Left cardiac atrium (tissue), 4 donors: ENCODE measurements at regions of chr7 and their contacts with region 1.

Region 1: GRCh38 chr7:7424151-7424873 is 111.4 kb downstream of the COL28A1 start:
- DNase-seq: peak; percentile 46
- ATAC-seq: peak; percentile 90 to 93

Region 2: GRCh38 chr7:7044501-7045200 is 379.7 kb before region 1 on chr7:
- intact Hi-C with region 1: no loop called
- DNase-seq: no peak
- ATAC-seq: no peak

Region 3: GRCh38 chr7:7103343-7104313 is 320.7 kb before region 1 on chr7:
- intact Hi-C with region 1: loop called in 1 of 2 experiments (anchors 10 kb)
- DNase-seq: no peak
- ATAC-seq: peak in 1 of 2 donors; percentile 46

Region 4: DNA sequence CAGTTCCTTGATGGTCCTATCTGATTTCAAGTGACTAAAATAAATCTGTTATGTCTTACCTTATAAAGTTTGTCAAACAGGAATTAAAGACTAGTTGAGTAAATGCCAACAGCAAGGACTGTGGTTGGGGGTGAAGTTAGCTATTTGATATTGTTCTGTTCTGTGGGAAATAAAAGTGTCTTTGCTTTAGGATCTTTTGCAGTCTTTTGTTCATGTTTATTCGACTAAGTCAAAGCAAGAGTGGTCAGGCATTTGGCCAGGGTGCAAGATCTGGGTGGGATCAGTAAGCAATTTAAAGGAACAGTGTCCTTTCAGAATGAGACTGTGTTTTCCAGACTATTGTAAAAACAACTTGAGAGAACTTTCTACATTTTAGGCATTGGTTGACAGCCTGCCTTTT is 111.4 kb after region 1 on chr7 and contains the start of gene COL28A1:
- intact Hi-C with region 1: loop called in 1 of 2 experiments (anchors 5 kb)
- DNase-seq: no peak
- ATAC-seq: no peak
- total RNA-seq, gene COL28A1: 3.6 to 8.9 TPM

Region 5: DNA sequence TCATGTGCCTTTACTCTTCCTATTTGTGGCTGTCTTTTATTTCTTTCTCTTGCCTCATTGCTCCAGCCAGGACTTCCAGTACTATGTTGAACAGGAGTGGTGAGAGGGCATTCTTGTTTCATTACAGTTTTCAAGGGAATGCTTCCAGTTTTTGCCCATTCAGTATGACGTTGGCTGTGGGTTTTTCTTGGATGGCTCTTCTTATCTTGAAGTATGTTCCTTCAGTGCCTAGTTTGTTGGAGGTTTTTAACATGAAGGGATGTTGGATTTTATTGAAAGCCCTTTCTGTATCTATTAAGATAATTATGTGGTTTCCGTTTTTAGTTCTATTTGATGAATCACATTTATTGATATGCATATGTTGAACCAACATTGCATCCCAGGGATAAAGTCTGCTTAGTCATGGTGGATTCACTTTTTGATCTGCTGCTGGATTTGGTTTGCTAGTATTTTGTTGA is 641.1 kb after region 1 on chr7:
- intact Hi-C with region 1: no loop called
- DNase-seq: no peak
- ATAC-seq: no peak